ENCODE measurements at regions of chr10 and their contacts with region 1.

Region 1: DNA sequence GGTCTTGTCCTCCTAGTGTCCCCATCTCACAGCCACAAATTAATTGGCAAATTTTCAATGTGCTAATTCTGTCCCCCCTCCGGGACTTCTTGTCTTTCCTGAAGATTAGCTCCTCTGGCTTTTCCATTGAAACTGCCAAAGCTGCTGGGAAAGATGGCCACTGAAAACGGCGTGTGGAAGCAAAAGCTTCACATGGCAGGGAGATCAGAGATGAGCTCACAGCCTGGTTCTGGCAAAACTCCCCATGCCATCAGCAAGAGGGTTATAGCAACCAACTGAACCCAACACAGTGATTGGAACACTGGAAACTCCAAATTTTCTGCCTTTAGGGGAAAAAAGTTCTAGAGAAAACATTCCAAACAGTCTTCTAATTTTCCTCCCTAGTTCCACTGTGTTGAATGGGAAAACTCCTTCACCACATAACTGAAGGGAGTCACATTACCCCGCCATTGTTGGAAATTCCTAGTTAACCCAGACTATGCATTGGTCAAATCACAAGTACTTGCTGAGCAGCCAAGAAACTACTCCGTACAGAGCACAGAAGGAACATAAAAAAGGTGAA is 37.0 kb downstream of the NRAP start:
- DNase-seq: no peak

Region 2: DNA sequence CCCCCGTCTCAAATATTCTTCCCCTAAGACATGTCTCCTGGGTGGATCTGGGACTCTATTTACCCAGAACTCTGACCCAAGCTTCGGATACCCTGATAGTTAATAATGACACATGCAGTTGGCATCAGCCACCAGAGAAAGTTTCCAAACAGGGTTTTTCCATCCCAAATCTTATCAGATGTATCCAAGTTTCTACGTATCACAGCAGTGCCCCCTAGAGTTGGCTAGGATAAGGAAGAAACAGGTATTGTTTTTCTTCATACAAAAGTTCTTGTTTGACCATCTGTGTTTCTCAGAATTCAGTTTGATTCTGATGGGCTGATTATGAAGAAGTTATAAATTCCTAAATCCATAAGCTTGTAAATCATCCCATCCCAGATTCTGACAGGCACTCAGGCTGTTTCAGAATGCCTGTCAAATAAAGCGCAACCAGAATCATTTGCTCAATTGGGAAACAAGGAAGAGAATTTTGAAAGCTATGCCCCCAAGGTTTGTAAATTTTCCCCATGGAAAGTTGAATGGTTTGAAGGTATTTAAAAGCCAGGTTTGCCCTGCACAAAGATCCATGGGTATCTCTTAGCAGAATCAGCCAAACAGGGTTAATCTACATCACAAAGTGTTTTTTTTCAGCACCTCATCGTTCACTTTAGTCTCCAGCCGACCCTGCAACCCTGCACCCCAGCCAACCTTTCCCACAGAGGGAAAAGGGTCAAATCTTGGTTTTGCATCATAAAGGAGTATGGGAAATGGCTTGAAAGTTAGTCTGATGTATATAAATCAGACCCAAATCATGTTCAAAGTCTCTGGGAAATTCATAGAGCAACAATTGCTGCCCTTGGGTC is 10.4 kb before region 1 on chr10:
- CTCF ChIA-PET with region 1: interaction called, 10 read pairs
- POLR2A ChIA-PET with region 1: no interaction called
- DNase-seq: peak; percentile 46

Measured in HEK293T (cell line).